AG04449 (cell line): ENCODE measurements at regions of chrX and their contacts with region 1.

Region 1: DNA sequence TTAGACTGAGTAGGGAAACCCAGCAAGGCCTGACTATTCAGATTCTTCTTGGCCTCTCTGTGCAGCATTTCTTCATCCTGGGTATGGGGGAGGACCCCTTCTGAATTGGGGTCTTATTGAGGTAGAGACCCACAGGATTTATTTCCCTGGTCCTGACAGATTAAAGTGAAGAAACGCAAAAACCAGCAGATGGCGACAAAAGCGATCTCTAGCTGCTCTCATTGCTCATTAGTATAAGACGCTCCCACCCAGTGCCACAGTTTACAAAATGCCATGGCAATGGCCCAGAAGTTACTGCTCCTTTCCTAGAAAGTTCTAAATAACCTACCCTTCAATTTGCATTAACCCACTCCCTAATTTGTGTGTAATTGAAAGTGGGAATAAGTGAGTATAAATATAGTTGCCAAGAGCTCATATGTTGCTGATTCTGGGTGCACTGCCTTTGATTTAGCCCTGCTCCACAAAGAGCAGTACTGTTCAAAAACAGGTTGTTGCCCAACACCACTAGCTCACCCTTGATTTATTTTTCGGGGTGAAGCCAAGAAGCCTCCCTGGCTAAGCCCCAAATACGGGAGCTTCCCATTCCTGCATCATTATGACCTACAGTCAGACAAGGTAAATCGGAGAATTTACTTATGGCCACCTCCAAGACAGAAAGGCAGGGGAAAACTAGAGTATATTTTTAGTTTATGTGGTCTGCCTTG is 3.7 kb upstream of the BEX4 start:
- DNase-seq: no peak
- H3K4me3 ChIP-seq: no peak overlapping the region
- CTCF ChIP-seq: peak; percentile 16

Region 2: GRCh38 chrX:103092942-103093341 is 118.2 kb before region 1 on chrX and contains the start of gene NXF3:
- CTCF ChIA-PET with region 1: no interaction called
- POLR2A ChIA-PET with region 1: no interaction called
- DNase-seq: no peak
- H3K4me3 ChIP-seq: no peak within 1 kb of the TSS
- CTCF ChIP-seq: no peak

Region 3: DNA sequence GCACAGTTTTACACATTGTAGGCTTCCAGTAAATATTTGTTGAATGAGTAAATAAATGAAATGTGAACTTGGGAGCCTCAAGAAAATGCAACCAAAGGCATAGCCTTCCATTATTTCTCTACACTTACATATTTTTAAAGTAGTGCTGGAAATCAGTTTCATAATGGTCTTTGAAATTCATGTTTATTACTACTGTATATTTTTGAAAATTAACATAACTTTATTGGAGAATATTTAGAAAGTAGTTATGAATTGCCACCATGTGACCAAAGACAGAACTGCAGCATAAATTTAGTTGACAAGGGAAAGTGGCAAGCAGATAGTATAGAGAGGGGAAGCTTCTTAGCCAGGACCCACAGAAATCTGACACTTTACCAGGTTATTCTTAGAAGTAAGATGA is 37.4 kb after region 1 on chrX:
- CTCF ChIA-PET with region 1: interaction called, 11 read pairs
- POLR2A ChIA-PET with region 1: no interaction called
- DNase-seq: no peak
- H3K4me3 ChIP-seq: no peak overlapping the region
- CTCF ChIP-seq: peak; percentile 21